K562 (cell line): ENCODE measurements at regions of chr1 and their contacts with region 1.

Region 1: DNA sequence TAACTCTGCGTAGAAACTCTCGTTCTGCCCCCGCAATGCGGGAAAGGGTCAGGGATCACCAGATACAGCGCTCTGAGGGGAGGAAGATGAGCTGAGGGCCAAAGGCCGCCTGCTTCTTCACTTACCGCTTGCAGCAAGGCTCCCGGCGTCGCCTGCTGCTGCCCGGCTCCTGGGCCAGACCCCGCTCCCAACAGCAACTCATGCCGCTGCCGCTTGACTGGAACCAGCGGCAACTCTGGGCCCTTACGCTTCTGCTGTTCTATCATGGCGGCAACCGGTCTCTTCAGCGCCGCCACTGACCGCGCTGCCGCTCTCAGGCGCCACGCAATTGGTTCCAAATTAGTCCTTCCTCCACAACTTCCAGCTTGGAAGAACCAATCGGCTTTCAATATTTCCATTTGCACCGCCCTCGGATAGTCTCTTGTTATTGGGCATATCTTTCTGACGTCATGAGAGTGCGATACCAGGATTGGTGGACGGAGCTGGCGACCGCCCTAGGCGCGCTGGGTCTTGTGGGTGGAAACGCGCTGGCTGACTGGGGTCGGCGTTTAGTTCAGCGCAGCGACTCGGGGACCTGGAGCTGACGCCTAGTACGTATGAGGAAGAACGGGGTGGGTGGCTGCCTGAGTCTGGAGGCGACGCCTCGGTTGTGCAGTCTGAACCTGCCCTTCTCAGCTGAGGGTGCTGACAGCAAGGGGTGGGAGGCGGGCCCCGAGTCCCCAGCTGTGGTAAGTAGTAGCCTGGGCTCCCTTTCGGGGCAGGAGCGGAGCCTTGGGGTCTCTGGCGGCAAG is at the starts of genes SNRNP40 and ZCCHC17:
- DNase-seq: peak; percentile 97 to 100 (median 98)
- ATAC-seq: peak; percentile 98
- H3K4me3 ChIP-seq: peak within 1 kb of the TSS; percentile 80
- H3K27ac ChIP-seq: peak within 1 kb of the TSS; percentile 91
- H3K4me1 ChIP-seq: peaks cover 5 to 17% of the 10 kb centered on the region in 2 experiments
- H3K27me3 ChIP-seq: no peaks in the 10 kb centered on the region
- CTCF ChIP-seq: peak in 2 of 3 experiments; percentile 38 to 45; a peak in 4 of 6 replicates
- EP300 ChIP-seq: peak; percentile 17; the same call in 1 of the 2 replicates
- POLR2A ChIP-seq: peak; percentile 99
- RAD21 ChIP-seq: peak in 1 of 2 experiments; percentile 16; a peak in 1 of 4 replicates
- polyA plus RNA-seq, gene SNRNP40: 48.7 to 58.0 TPM
- polyA plus RNA-seq, gene ZCCHC17: 104 to 150 TPM

Region 2: DNA sequence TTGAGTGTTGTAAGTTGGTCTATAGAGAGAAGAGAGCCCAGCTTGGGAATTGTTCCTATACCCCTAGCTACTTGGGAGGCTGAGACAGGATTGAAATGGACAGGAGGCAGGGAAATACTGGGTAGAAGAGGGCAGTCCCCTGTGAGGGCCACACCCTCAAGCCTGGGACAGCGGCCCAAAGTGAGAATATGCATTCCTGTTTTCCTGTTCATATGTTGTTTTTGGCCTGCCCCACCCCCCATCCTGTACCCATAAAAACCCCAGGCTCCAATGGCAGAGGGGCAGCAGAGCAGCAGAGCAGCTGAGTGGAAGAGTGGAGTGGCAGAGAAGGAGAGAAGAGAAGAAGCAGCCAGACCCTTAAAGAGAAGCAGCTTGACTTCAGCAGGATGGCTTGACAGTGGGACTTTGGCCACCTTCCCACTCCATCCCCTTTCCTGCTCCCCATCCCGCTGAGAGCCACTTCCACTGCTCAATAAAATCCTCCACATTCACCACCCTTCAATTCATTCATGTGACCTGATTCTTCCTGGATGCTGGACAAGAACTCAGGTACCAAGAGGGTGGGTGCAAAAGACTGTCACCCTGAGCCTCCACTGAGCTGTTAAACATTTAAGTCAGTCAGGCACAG is 160.6 kb before region 1 on chr1:
- CTCF ChIA-PET with region 1: no interaction called
- POLR2A ChIA-PET with region 1: no interaction called
- in situ Hi-C with region 1: no loop called
- intact Hi-C with region 1: no loop called
- DNase-seq: no peak
- ATAC-seq: no peak
- H3K4me3 ChIP-seq: no peak overlapping the region
- H3K27ac ChIP-seq: no peak overlapping the region
- H3K4me1 ChIP-seq: no peaks in the 10 kb centered on the region; a peak in 1 of 5 replicates
- H3K27me3 ChIP-seq: no peaks in the 10 kb centered on the region
- CTCF ChIP-seq: no peak
- EP300 ChIP-seq: no peak
- POLR2A ChIP-seq: no peak
- RAD21 ChIP-seq: no peak

Region 3: GRCh38 chr1:31272369-31272768 is 24.3 kb before region 1 on chr1:
- CTCF ChIA-PET with region 1: no interaction called
- POLR2A ChIA-PET with region 1: interaction called, 10 read pairs
- in situ Hi-C with region 1: no loop called
- intact Hi-C with region 1: no loop called
- DNase-seq: no peak
- ATAC-seq: no peak
- H3K4me3 ChIP-seq: no peak overlapping the region
- H3K27ac ChIP-seq: no peak overlapping the region
- H3K4me1 ChIP-seq: no peaks in the 10 kb centered on the region
- H3K27me3 ChIP-seq: no peaks in the 10 kb centered on the region
- CTCF ChIP-seq: no peak
- EP300 ChIP-seq: no peak
- POLR2A ChIP-seq: no peak
- RAD21 ChIP-seq: no peak